Heart left ventricle (tissue), 16 donors: ENCODE measurements at regions of chr4 and their contacts with region 1.

Region 1: GRCh38 chr4:140252742-140253555 is 99.0 kb upstream of the MAML3 start:
- DNase-seq: peak; percentile 71 to 88 (median 76)
- ATAC-seq: peak; percentile 56 to 94 (median 88)
- H3K4me3 ChIP-seq: peak overlapping the region; percentile 47 to 93 (median 66)
- H3K27ac ChIP-seq: peak overlapping the region; percentile 78 to 95 (median 90)
- H3K4me1 ChIP-seq: peaks cover 0 to 33% (median 12%) of the 10 kb centered on the region in 12 donors
- H3K27me3 ChIP-seq: no peaks in the 10 kb centered on the region
- CTCF ChIP-seq: peak; percentile 85 to 99 (median 97)
- POLR2A ChIP-seq: no peak

Region 2: DNA sequence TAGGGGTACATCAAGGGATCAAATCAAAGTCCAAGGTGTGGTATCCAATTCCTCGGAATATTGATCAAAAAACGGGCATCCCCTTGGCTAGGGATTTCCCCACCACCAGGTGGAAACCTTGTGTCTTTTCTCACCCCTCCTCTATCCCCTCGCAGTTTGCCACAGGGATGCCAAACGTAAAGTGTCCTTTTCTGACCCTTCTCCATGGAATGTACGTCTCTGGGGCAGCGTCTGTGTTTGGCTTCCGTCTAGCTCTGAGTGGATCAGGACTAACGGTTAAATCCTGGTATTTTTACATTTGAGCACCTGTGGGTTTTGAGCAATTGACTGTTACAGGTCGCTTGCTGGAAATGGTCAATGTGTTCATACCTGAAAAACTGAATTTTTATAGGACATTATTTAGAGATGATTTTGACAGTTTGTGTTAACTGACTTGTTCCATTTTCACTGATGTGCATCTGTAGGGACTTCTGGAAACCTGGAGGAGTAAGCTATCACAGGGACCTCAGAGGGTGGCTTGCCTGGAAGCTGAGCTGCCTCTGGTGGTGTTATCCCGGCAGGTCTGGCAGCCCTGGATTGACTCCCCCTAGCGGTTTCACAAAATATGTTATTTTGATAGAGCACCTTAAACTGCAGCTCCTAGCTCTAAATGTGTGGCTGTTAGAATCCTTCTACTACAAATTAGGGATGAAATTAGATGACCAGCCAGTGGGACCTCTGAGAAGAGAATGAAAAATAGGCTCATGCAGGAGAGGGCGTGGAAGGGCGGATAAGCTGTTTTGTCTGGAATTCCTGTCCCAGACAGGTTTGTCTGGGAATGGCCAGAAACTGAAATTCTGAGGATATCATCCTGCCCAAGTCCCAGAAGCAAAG is 596.1 kb before region 1 on chr4:
- intact Hi-C with region 1: loop called in 6 of 10 experiments (anchors 5 to 10 kb)
- DNase-seq: peak in 4 of 5 donors; percentile 46 to 60 (median 54)
- ATAC-seq: peak in 3 of 4 donors; percentile 68 to 80 (median 71)
- H3K4me3 ChIP-seq: no peak overlapping the region
- H3K27ac ChIP-seq: peak overlapping the region in 2 of 12 donors; percentile 28 to 32
- H3K4me1 ChIP-seq: peaks cover 0 to 37% (median 13%) of the 10 kb centered on the region in 12 donors
- H3K27me3 ChIP-seq: no peaks in the 10 kb centered on the region
- CTCF ChIP-seq: peak; percentile 68 to 88 (median 81)
- POLR2A ChIP-seq: no peak

Region 3: GRCh38 chr4:139740531-139741041 is 512.4 kb before region 1 on chr4:
- intact Hi-C with region 1: loop called in 7 of 10 experiments (anchors 1 to 5 kb)
- DNase-seq: peak; percentile 77 to 83 (median 82)
- ATAC-seq: peak; percentile 88 to 97 (median 96)
- H3K4me3 ChIP-seq: peak overlapping the region in 8 of 12 donors; percentile 12 to 23 (median 14)
- H3K27ac ChIP-seq: peak overlapping the region; percentile 26 to 91 (median 84)
- H3K4me1 ChIP-seq: peaks cover 0 to 62% (median 33%) of the 10 kb centered on the region in 12 donors
- H3K27me3 ChIP-seq: no peaks in the 10 kb centered on the region
- CTCF ChIP-seq: peak in 6 of 12 donors; percentile 12 to 56 (median 23)
- POLR2A ChIP-seq: peak in 1 of 2 donors; percentile 15

Region 4: GRCh38 chr4:139919521-139919920 is 333.4 kb before region 1 on chr4:
- intact Hi-C with region 1: loop called in 1 of 10 experiments (anchors 5 kb)
- DNase-seq: peak in 3 of 5 donors; percentile 29 to 43 (median 33)
- ATAC-seq: peak; percentile 62 to 82 (median 69)
- H3K4me3 ChIP-seq: peak overlapping the region in 1 of 12 donors; percentile 1
- H3K27ac ChIP-seq: peak overlapping the region; percentile 19 to 86 (median 80)
- H3K4me1 ChIP-seq: peaks cover 11 to 90% (median 64%) of the 10 kb centered on the region in 12 donors
- H3K27me3 ChIP-seq: no peaks in the 10 kb centered on the region
- CTCF ChIP-seq: no peak
- POLR2A ChIP-seq: no peak

Region 5: GRCh38 chr4:140095694-140096482 is 157.1 kb before region 1 on chr4:
- intact Hi-C with region 1: loop called in 1 of 10 experiments (anchors 2 kb)
- DNase-seq: peak in 4 of 5 donors; percentile 52 to 69 (median 58)
- ATAC-seq: peak in 3 of 4 donors; percentile 41 to 72 (median 59)
- H3K4me3 ChIP-seq: peak overlapping the region in 7 of 12 donors; percentile 11 to 35 (median 16)
- H3K27ac ChIP-seq: peak overlapping the region; percentile 38 to 88 (median 82)
- H3K4me1 ChIP-seq: peaks cover 7 to 99% (median 74%) of the 10 kb centered on the region in 12 donors
- H3K27me3 ChIP-seq: no peaks in the 10 kb centered on the region
- CTCF ChIP-seq: no peak
- POLR2A ChIP-seq: peak in 1 of 2 donors; percentile 43

Region 6: GRCh38 chr4:140141210-140141835 is 111.6 kb before region 1 on chr4:
- intact Hi-C with region 1: no loop called
- DNase-seq: no peak
- ATAC-seq: no peak
- H3K4me3 ChIP-seq: no peak overlapping the region
- H3K27ac ChIP-seq: no peak overlapping the region
- H3K4me1 ChIP-seq: peaks cover 0 to 6% (median 0%) of the 10 kb centered on the region in 12 donors
- H3K27me3 ChIP-seq: no peaks in the 10 kb centered on the region
- CTCF ChIP-seq: no peak
- POLR2A ChIP-seq: no peak